Caco-2 (cell line): ENCODE measurements at regions of chr17 and their contacts with region 1.

Region 1: GRCh38 chr17:30236766-30237165 is 1.3 kb upstream of the SLC6A4 start:
- DNase-seq: peak; percentile 82
- H3K4me3 ChIP-seq: no peak overlapping the region
- H3K4me3 Mint-ChIP-seq: peak overlapping the region; percentile 98
- H3K27ac Mint-ChIP-seq: peak overlapping the region; percentile 91
- H3K4me1 ChIP-seq: peaks cover 29% of the 10 kb centered on the region
- H3K4me1 Mint-ChIP-seq: peaks cover 35% of the 10 kb centered on the region
- H3K27me3 ChIP-seq: no peaks in the 10 kb centered on the region
- H3K27me3 Mint-ChIP-seq: no peaks in the 10 kb centered on the region
- CTCF ChIP-seq: peak; percentile 52 to 78

Region 2: GRCh38 chr17:30104575-30105339 is 132.0 kb before region 1 on chr17:
- CTCF ChIA-PET with region 1: interaction called, 16 read pairs
- POLR2A ChIA-PET with region 1: interaction called, 3 read pairs
- intact Hi-C with region 1: loop called (anchors 2 kb)
- DNase-seq: peak; percentile 86 to 90
- H3K4me3 ChIP-seq: peak overlapping the region; percentile 42
- H3K4me3 Mint-ChIP-seq: peak overlapping the region; percentile 73
- H3K27ac Mint-ChIP-seq: peak overlapping the region; percentile 80
- H3K4me1 ChIP-seq: no peaks in the 10 kb centered on the region
- H3K4me1 Mint-ChIP-seq: peaks cover 7% of the 10 kb centered on the region
- H3K27me3 ChIP-seq: no peaks in the 10 kb centered on the region
- H3K27me3 Mint-ChIP-seq: no peaks in the 10 kb centered on the region
- CTCF ChIP-seq: peak; percentile 94 to 97

Region 3: GRCh38 chr17:30124273-30124796 is 112.4 kb before region 1 on chr17:
- CTCF ChIA-PET with region 1: interaction called, 17 read pairs
- POLR2A ChIA-PET with region 1: no interaction called
- intact Hi-C with region 1: loop called (anchors 2 kb)
- DNase-seq: no peak
- H3K4me3 ChIP-seq: no peak overlapping the region
- H3K4me3 Mint-ChIP-seq: no peak overlapping the region
- H3K27ac Mint-ChIP-seq: no peak overlapping the region
- H3K4me1 ChIP-seq: no peaks in the 10 kb centered on the region
- H3K4me1 Mint-ChIP-seq: no peaks in the 10 kb centered on the region
- H3K27me3 ChIP-seq: no peaks in the 10 kb centered on the region
- H3K27me3 Mint-ChIP-seq: no peaks in the 10 kb centered on the region
- CTCF ChIP-seq: no peak

Region 4: GRCh38 chr17:30151471-30151870 is 85.3 kb before region 1 on chr17:
- CTCF ChIA-PET with region 1: interaction called, 10 read pairs
- POLR2A ChIA-PET with region 1: no interaction called
- intact Hi-C with region 1: no loop called
- DNase-seq: no peak
- H3K4me3 ChIP-seq: no peak overlapping the region
- H3K4me3 Mint-ChIP-seq: no peak overlapping the region
- H3K27ac Mint-ChIP-seq: no peak overlapping the region
- H3K4me1 ChIP-seq: no peaks in the 10 kb centered on the region
- H3K4me1 Mint-ChIP-seq: no peaks in the 10 kb centered on the region
- H3K27me3 ChIP-seq: no peaks in the 10 kb centered on the region
- H3K27me3 Mint-ChIP-seq: no peaks in the 10 kb centered on the region
- CTCF ChIP-seq: no peak

Region 5: GRCh38 chr17:30191072-30191471 is 45.7 kb before region 1 on chr17:
- CTCF ChIA-PET with region 1: interaction called, 4 read pairs
- POLR2A ChIA-PET with region 1: no interaction called
- intact Hi-C with region 1: loop called (anchors 5 kb)
- DNase-seq: no peak
- H3K4me3 ChIP-seq: no peak overlapping the region
- H3K4me3 Mint-ChIP-seq: no peak overlapping the region
- H3K27ac Mint-ChIP-seq: no peak overlapping the region
- H3K4me1 ChIP-seq: no peaks in the 10 kb centered on the region
- H3K4me1 Mint-ChIP-seq: no peaks in the 10 kb centered on the region
- H3K27me3 ChIP-seq: no peaks in the 10 kb centered on the region
- H3K27me3 Mint-ChIP-seq: no peaks in the 10 kb centered on the region
- CTCF ChIP-seq: no peak

Region 6: GRCh38 chr17:30248786-30249185 is 12.0 kb after region 1 on chr17:
- CTCF ChIA-PET with region 1: no interaction called
- POLR2A ChIA-PET with region 1: no interaction called
- intact Hi-C with region 1: no loop called
- DNase-seq: no peak
- H3K4me3 ChIP-seq: no peak overlapping the region
- H3K4me3 Mint-ChIP-seq: no peak overlapping the region
- H3K27ac Mint-ChIP-seq: no peak overlapping the region
- H3K4me1 ChIP-seq: peaks cover 40% of the 10 kb centered on the region
- H3K4me1 Mint-ChIP-seq: peaks cover 18% of the 10 kb centered on the region
- H3K27me3 ChIP-seq: no peaks in the 10 kb centered on the region
- H3K27me3 Mint-ChIP-seq: no peaks in the 10 kb centered on the region
- CTCF ChIP-seq: no peak